Vagina (tissue), 2 donors: ENCODE measurements at regions of chr3 and their contacts with region 1.

Region 1: DNA sequence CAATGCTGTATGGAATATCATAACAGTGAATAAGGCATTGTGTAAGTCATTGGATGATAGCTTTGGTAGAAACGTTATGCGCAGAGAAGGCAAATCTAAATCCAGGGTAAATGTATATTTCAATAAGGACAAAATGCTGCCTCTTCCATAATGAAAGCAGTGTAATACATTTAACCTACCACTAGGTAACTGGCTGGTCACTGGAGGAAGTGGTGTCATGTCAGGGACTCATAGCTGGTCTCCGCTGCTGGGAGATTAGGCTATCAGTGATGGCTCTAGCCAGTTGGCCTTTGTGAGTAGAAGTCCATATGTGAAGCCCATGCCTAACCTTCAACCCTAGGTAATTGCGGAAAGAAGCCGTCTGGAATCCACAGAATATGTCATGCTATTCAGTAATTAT is 140.9 kb downstream of the NLGN1 start:
- DNase-seq: no peak
- H3K4me3 ChIP-seq: no peak overlapping the region
- H3K27ac ChIP-seq: no peak overlapping the region
- H3K4me1 ChIP-seq: no peaks in the 10 kb centered on the region
- H3K27me3 ChIP-seq: no peaks in the 10 kb centered on the region
- CTCF ChIP-seq: no peak
- POLR2A ChIP-seq: no peak

Region 2: DNA sequence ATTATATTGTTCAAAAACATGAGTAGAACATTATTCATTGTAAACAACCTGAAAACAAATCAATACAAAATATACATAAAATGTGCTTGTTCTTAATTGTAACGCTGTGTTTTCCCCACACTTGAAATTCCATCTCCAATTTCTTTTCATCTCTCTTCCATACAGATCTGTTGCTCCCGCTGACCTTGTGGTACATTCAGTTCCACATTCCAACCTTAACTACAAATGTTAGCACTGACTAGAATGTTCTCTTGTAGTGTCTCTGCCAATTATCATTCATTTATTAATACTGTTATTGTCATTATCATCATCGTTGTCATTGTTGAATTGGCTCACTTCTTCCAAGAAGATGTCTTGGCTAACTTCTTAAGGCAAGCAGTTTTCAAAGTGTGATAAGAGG is 75.2 kb before region 1 on chr3:
- intact Hi-C with region 1: loop called (anchors 5 kb)
- DNase-seq: no peak
- H3K4me3 ChIP-seq: no peak overlapping the region
- H3K27ac ChIP-seq: no peak overlapping the region
- H3K4me1 ChIP-seq: no peaks in the 10 kb centered on the region
- H3K27me3 ChIP-seq: no peaks in the 10 kb centered on the region
- CTCF ChIP-seq: no peak
- POLR2A ChIP-seq: no peak